Naive thymus-derived CD4-positive, alpha-beta T cell (primary cell): ENCODE measurements at regions of chr6 and their contacts with region 1.

Region 1: GRCh38 chr6:42928986-42929820 is at the start of gene CNPY3:
- DNase-seq: peak; percentile 80 to 96 (median 95)
- ATAC-seq: peak; percentile 90
- H3K4me3 ChIP-seq: peak within 1 kb of the TSS; percentile 80
- H3K4me3 Mint-ChIP-seq: peak within 1 kb of the TSS; percentile 86 to 99 (median 98)
- H3K27ac ChIP-seq: peak within 1 kb of the TSS; percentile 95
- H3K27ac Mint-ChIP-seq: peak within 1 kb of the TSS; percentile 96 to 100 (median 99)
- H3K4me1 ChIP-seq: peaks cover 33% of the 10 kb centered on the region in 2 donors
- H3K4me1 Mint-ChIP-seq: peaks cover 34 to 53% (median 43%) of the 10 kb centered on the region in 7 donors
- H3K27me3 ChIP-seq: no peaks in the 10 kb centered on the region
- H3K27me3 Mint-ChIP-seq: no peaks in the 10 kb centered on the region
- total RNA-seq, gene CNPY3: 58.6 to 98.9 (median 87.4) TPM

Region 2: DNA sequence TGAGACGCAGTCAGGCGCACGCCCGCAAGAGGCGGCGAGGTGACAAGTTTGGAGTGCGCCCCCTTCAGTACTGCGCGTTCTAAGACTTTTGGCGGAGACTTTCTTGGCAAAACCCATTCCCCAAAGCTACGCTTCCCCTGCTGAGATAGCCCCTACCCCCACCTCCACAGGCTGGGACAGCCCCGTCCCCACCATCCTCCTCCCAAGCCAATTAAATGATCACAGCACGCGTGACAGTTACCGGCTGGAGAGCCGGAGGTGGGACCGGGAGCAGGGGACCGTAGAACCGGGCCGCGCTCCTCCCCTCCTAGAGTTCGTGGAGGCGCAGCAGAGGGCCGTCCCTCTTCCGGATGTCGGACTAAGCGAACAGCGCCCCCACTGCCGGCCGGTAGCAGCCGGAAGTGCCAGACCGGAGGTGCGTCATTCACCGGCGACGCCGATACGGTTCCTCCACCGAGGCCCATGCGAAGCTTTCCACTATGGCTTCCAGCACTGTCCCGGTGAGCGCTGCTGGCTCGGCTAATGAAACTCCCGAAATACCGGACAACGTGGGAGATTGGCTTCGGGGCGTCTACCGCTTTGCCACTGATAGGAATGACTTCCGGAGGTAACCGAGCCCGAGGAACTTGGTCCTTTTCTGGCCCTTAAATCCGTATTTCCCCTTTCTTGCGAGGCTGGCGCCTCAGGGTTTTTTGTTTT is 1141.8 kb before region 1 on chr6 and contains the start of gene TOMM6:
- CTCF ChIA-PET with region 1: no interaction called
- POLR2A ChIA-PET with region 1: no interaction called
- intact Hi-C with region 1: loop called in 1 of 2 experiments (anchors 1 kb)
- DNase-seq: peak; percentile 87 to 96 (median 94)
- ATAC-seq: peak; percentile 88
- H3K4me3 ChIP-seq: peak within 1 kb of the TSS; percentile 97
- H3K4me3 Mint-ChIP-seq: peak within 1 kb of the TSS; percentile 91 to 99 (median 97)
- H3K27ac ChIP-seq: peak within 1 kb of the TSS; percentile 89
- H3K27ac Mint-ChIP-seq: peak within 1 kb of the TSS; percentile 95 to 99 (median 98)
- H3K4me1 ChIP-seq: peaks cover 6 to 9% of the 10 kb centered on the region in 2 donors
- H3K4me1 Mint-ChIP-seq: peaks cover 8 to 29% (median 17%) of the 10 kb centered on the region in 7 donors
- H3K27me3 ChIP-seq: no peaks in the 10 kb centered on the region
- H3K27me3 Mint-ChIP-seq: peaks cover 0 to 14% (median 0%) of the 10 kb centered on the region in 5 donors
- total RNA-seq, gene TOMM6: 114 to 193 (median 128) TPM

Region 3: DNA sequence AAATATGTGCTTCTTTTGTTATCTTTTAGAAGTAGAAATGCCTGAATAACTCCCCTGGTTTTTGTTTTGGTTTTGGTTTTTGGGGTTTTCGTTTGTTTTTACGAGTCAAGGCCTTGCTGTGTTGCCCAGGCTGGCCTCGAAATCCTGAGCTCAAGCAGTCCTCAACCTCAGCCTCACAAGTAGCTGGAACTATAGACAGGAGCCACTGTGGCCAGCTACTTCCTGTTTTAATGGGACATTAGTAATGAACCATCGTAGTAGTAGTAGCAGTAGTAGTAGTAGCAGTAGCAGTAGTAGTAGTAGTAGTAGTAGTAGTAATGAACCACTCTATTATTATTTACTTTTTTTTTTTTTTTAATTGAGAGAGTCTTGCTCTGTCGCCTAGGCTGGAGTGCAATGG is 299.4 kb before region 1 on chr6:
- CTCF ChIA-PET with region 1: no interaction called
- POLR2A ChIA-PET with region 1: no interaction called
- intact Hi-C with region 1: no loop called
- DNase-seq: no peak
- ATAC-seq: no peak
- H3K4me3 ChIP-seq: no peak overlapping the region
- H3K4me3 Mint-ChIP-seq: no peak overlapping the region
- H3K27ac ChIP-seq: no peak overlapping the region
- H3K27ac Mint-ChIP-seq: peak overlapping the region in 3 of 9 donors; percentile 16 to 67 (median 47)
- H3K4me1 ChIP-seq: no peaks in the 10 kb centered on the region
- H3K4me1 Mint-ChIP-seq: peaks cover 0 to 18% (median 10%) of the 10 kb centered on the region in 7 donors
- H3K27me3 ChIP-seq: no peaks in the 10 kb centered on the region
- H3K27me3 Mint-ChIP-seq: no peaks in the 10 kb centered on the region

Region 4: DNA sequence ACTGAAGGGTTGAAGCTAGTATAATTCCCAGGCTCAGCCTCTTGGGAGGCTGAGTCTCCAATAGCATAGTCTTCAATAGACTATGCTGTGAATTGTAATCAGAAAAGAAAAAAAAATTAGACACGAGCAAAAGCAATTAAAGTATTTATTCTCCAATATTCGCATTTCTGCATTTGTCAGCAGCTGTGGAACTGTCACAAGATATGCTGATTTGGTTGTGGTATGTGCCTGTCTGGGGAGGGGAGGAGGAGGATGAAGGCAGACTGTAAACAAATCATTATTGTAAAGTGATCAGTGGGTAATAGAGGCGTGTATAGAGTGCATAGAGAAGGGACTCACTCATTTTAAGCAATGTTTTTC is 157.5 kb before region 1 on chr6:
- CTCF ChIA-PET with region 1: no interaction called
- POLR2A ChIA-PET with region 1: no interaction called
- intact Hi-C with region 1: loop called in 1 of 2 experiments (anchors 1 kb)
- DNase-seq: peak in 1 of 9 donors; percentile 63
- ATAC-seq: peak; percentile 35
- H3K4me3 ChIP-seq: peak overlapping the region; percentile 50
- H3K4me3 Mint-ChIP-seq: peak overlapping the region; percentile 67 to 91 (median 84)
- H3K27ac ChIP-seq: peak overlapping the region; percentile 91
- H3K27ac Mint-ChIP-seq: peak overlapping the region; percentile 99 to 100 (median 100)
- H3K4me1 ChIP-seq: peaks cover 67 to 72% of the 10 kb centered on the region in 2 donors
- H3K4me1 Mint-ChIP-seq: peaks cover 49 to 86% (median 75%) of the 10 kb centered on the region in 7 donors
- H3K27me3 ChIP-seq: no peaks in the 10 kb centered on the region
- H3K27me3 Mint-ChIP-seq: no peaks in the 10 kb centered on the region

Region 5: DNA sequence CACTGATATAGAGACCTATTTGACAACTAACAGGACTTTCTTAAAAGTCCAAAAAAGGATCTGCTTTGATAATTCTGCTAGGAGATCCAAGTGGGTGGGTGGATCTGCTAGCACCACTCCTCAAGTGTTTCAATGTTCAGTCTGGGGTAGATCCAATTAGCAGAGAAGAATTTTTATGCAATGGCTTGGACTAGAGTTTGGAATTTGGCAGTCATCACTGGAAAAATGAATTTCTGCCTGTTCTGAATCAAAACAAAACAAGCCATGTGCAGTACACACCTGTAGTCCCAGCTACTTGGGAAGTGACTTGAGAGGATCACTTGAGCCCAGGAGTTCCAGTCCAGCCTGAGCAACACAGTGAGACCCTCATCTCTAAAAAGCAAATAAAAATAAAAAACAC is 18.7 kb after region 1 on chr6:
- CTCF ChIA-PET with region 1: no interaction called
- POLR2A ChIA-PET with region 1: interaction called, 23 read pairs
- intact Hi-C with region 1: no loop called
- DNase-seq: no peak
- ATAC-seq: no peak
- H3K4me3 ChIP-seq: no peak overlapping the region
- H3K4me3 Mint-ChIP-seq: no peak overlapping the region
- H3K27ac ChIP-seq: no peak overlapping the region
- H3K27ac Mint-ChIP-seq: peak overlapping the region in 2 of 9 donors; percentile 36 to 41
- H3K4me1 ChIP-seq: no peaks in the 10 kb centered on the region
- H3K4me1 Mint-ChIP-seq: peaks cover 0 to 3% (median 0%) of the 10 kb centered on the region in 7 donors
- H3K27me3 ChIP-seq: no peaks in the 10 kb centered on the region
- H3K27me3 Mint-ChIP-seq: no peaks in the 10 kb centered on the region

Region 6: DNA sequence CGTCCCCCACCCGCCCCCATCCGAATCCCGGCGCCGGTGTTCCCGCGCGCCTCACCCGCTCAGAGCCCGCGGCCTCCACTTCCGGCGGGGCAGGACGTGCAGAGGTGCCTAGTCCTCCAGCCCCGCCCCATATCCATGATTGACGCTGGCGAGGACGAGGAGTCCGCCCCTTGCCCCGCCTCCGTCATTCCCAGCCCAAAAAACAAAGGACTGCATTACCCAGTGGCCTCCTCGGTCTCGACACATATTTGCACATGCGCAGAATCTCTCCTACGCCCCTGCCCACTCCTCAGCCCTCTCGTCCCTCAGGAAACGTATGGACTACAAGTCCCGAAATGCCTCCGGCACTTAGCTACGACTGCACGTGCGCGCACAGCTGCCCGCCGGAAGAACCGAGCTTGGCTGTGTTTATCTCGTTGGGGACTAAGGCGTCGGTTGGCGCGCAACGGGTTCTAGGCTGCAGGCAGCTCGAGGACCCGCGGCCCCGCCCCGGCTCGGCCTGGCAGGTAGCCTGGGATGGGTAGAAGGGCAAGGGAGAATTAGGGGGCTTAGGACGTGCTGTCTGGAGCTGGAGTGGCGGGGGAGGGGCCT is 84.7 kb after region 1 on chr6 and contains the starts of genes KLHDC3 and MEA1:
- CTCF ChIA-PET with region 1: no interaction called
- POLR2A ChIA-PET with region 1: interaction called, 67 read pairs
- intact Hi-C with region 1: loop called (anchors 1 kb)
- DNase-seq: peak; percentile 83 to 100 (median 99)
- ATAC-seq: peak; percentile 98
- H3K4me3 ChIP-seq: peak within 1 kb of the TSS; percentile 73
- H3K4me3 Mint-ChIP-seq: peak within 1 kb of the TSS; percentile 85 to 99 (median 92)
- H3K27ac ChIP-seq: peak within 1 kb of the TSS; percentile 84
- H3K27ac Mint-ChIP-seq: peak within 1 kb of the TSS; percentile 82 to 97 (median 92)
- H3K4me1 ChIP-seq: peaks cover 20 to 31% of the 10 kb centered on the region in 2 donors
- H3K4me1 Mint-ChIP-seq: peaks cover 45 to 78% (median 58%) of the 10 kb centered on the region in 7 donors
- H3K27me3 ChIP-seq: no peaks in the 10 kb centered on the region
- H3K27me3 Mint-ChIP-seq: peaks cover 0 to 3% (median 0%) of the 10 kb centered on the region in 5 donors
- total RNA-seq, gene KLHDC3: 39.9 to 76.9 (median 67.4) TPM
- total RNA-seq, gene MEA1: 20.3 to 58.0 (median 32.7) TPM

Region 7: DNA sequence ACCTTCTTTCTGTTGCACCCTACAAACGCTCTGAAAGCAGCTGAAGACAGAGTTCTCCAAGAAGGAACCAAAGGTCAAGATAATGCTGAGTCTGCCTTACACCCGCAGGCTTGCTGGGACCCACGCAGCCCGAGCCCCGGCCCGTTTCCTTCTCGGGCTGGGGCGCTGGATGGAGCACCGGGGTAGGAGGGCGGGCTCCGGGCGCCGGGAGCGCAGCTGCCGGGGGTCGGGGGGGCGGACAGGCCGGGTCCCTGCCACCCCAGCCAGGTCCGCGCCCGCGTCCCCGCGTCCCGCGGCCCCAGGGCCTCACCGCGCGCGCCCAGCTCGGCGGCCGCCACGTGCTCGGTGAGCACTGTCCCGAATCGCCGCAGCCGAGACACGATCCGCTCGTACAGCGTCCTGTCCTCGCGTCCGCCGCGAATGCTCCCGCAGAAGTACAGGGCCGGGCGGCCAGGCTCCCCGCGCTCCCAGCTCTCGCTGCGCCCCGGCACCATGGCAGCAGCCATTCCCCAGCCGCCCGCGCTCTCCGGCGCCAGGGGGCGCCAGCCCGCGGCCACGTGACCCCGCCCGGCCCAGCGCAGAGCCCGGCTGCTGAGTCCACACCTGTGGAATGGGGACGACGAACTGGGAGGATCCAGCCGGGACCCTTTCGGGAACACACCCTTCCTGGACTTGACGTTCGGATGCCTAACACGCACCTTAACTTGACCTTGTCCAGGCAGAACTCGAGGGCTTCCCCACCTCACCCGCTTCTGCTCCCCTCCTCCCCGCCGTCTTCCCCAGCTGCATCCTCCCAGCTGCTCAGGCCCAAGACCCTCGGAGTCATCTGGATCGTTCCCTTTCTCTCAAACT is 300.0 kb after region 1 on chr6 and contains the start of gene DNPH1:
- CTCF ChIA-PET with region 1: no interaction called
- POLR2A ChIA-PET with region 1: interaction called, 6 read pairs
- intact Hi-C with region 1: loop called in 1 of 2 experiments (anchors 2 kb)
- DNase-seq: peak; percentile 65 to 91 (median 81)
- ATAC-seq: peak; percentile 84
- H3K4me3 ChIP-seq: peak within 1 kb of the TSS; percentile 53
- H3K4me3 Mint-ChIP-seq: peak within 1 kb of the TSS; percentile 87 to 95 (median 91)
- H3K27ac ChIP-seq: peak within 1 kb of the TSS; percentile 88
- H3K27ac Mint-ChIP-seq: peak within 1 kb of the TSS; percentile 92 to 98 (median 95)
- H3K4me1 ChIP-seq: peaks cover 5 to 24% of the 10 kb centered on the region in 2 donors
- H3K4me1 Mint-ChIP-seq: peaks cover 28 to 48% (median 40%) of the 10 kb centered on the region in 7 donors
- H3K27me3 ChIP-seq: no peaks in the 10 kb centered on the region
- H3K27me3 Mint-ChIP-seq: peaks cover 0 to 16% (median 0%) of the 10 kb centered on the region in 5 donors
- total RNA-seq, gene DNPH1: 25.4 to 65.7 (median 33.9) TPM

Region 8: GRCh38 chr6:43355862-43356590 is 426.8 kb after region 1 on chr6:
- CTCF ChIA-PET with region 1: no interaction called
- POLR2A ChIA-PET with region 1: no interaction called
- intact Hi-C with region 1: no loop called
- DNase-seq: no peak
- ATAC-seq: no peak
- H3K4me3 ChIP-seq: no peak overlapping the region
- H3K4me3 Mint-ChIP-seq: no peak overlapping the region
- H3K27ac ChIP-seq: no peak overlapping the region
- H3K27ac Mint-ChIP-seq: peak overlapping the region in 1 of 9 donors; percentile 14
- H3K4me1 ChIP-seq: no peaks in the 10 kb centered on the region
- H3K4me1 Mint-ChIP-seq: peaks cover 0 to 29% (median 15%) of the 10 kb centered on the region in 7 donors
- H3K27me3 ChIP-seq: no peaks in the 10 kb centered on the region
- H3K27me3 Mint-ChIP-seq: no peaks in the 10 kb centered on the region

Region 9: GRCh38 chr6:43477235-43478007 is 548.2 kb after region 1 on chr6 and contains the start of gene TJAP1:
- CTCF ChIA-PET with region 1: no interaction called
- POLR2A ChIA-PET with region 1: interaction called, 3 read pairs
- intact Hi-C with region 1: loop called in 1 of 2 experiments (anchors 1 kb)
- DNase-seq: peak; percentile 89 to 99 (median 95)
- ATAC-seq: peak; percentile 100
- H3K4me3 ChIP-seq: peak within 1 kb of the TSS; percentile 83
- H3K4me3 Mint-ChIP-seq: peak within 1 kb of the TSS; percentile 87 to 99 (median 93)
- H3K27ac ChIP-seq: peak within 1 kb of the TSS; percentile 96
- H3K27ac Mint-ChIP-seq: peak within 1 kb of the TSS; percentile 90 to 98 (median 96)
- H3K4me1 ChIP-seq: peaks cover 10 to 16% of the 10 kb centered on the region in 2 donors
- H3K4me1 Mint-ChIP-seq: peaks cover 37 to 54% (median 51%) of the 10 kb centered on the region in 7 donors
- H3K27me3 ChIP-seq: no peaks in the 10 kb centered on the region
- H3K27me3 Mint-ChIP-seq: no peaks in the 10 kb centered on the region
- total RNA-seq, gene TJAP1: 29.2 to 55.2 (median 33.5) TPM